ENCODE measurements at regions of chr5 and their contacts with region 1.

Region 1: DNA sequence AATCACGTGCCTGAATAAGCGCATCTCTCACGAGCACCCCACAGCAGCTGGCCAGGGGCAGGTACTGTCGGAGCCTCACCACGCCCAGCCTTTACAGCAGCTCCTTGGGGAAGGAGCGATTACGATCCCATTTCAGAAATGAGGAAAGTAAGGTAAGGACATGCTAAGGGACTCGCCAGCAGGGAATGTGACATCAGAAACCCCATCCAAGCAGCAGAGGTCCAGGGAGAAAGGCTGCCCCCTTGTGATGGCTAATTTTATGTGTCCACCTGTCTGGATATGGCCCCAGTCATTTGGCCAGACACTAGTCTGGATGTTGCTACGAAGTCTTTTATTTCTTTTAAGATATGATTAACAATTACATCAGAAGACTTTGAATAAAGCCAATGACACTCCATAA is 77.3 kb downstream of the UBE2QL1 start:
- DNase-seq: no peak
- ATAC-seq: peak; percentile 63 to 87 (median 73)
- H3K4me3 ChIP-seq: no peak overlapping the region
- H3K27ac ChIP-seq: no peak overlapping the region
- H3K4me1 ChIP-seq: no peaks in the 10 kb centered on the region
- H3K27me3 ChIP-seq: no peaks in the 10 kb centered on the region
- CTCF ChIP-seq: peak in 11 of 12 donors; percentile 22 to 51 (median 41)
- POLR2A ChIP-seq: no peak

Region 2: DNA sequence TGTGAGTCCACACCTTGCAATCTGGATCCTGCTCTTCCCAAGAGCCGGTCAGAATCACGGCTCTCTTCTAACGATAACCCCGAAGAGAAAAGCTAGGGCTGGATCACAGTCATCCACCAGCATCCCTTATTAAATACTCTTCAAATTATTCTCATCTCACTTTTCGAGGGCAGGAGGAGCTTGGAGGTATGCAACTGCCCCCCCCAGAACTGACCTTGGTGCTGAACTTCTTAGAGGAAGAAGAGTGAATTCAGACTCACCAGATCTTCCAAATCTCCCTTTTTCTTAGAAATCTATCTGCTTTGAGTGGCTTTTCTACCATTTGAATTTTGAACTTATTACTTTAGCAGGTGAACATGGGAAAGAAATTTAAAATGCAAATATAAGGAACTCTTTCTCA is 223.2 kb before region 1 on chr5:
- intact Hi-C with region 1: loop called in 3 of 10 experiments (anchors 10 kb)
- DNase-seq: no peak
- ATAC-seq: no peak
- H3K4me3 ChIP-seq: no peak overlapping the region
- H3K27ac ChIP-seq: no peak overlapping the region
- H3K4me1 ChIP-seq: no peaks in the 10 kb centered on the region
- H3K27me3 ChIP-seq: no peaks in the 10 kb centered on the region
- CTCF ChIP-seq: no peak
- POLR2A ChIP-seq: no peak

Region 3: DNA sequence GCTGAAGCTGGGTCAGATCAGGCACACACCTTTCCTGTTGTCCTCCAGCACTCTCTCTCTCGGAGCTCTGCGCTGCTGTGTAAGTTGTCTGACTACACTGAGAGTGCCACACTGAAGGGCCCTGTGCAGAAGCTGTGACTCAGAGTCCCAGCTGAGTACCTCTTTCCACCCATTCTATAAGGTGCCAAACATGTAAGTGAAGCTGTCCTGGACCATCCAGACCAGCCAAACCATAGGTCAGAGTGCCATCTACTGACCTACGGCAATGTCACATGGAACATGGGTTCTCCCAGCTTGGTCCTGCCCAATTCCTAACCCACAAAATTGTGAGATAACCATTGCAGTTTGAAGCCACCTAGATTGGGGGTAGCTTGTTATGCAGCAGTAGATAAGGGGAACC is 938.3 kb after region 1 on chr5:
- intact Hi-C with region 1: no loop called
- DNase-seq: no peak
- ATAC-seq: no peak
- H3K4me3 ChIP-seq: no peak overlapping the region
- H3K27ac ChIP-seq: no peak overlapping the region
- H3K4me1 ChIP-seq: no peaks in the 10 kb centered on the region
- H3K27me3 ChIP-seq: no peaks in the 10 kb centered on the region
- CTCF ChIP-seq: no peak
- POLR2A ChIP-seq: no peak